Naive thymus-derived CD4-positive, alpha-beta T cell (primary cell): ENCODE measurements at regions of chr18 and their contacts with region 1.

Region 1: GRCh38 chr18:3062798-3063680 is 50.1 kb upstream of the LPIN2 start:
- DNase-seq: peak; percentile 47 to 76 (median 67)
- ATAC-seq: peak; percentile 59
- H3K4me3 ChIP-seq: peak overlapping the region; percentile 55
- H3K4me3 Mint-ChIP-seq: peak overlapping the region; percentile 56 to 83 (median 77)
- H3K27ac ChIP-seq: peak overlapping the region; percentile 96
- H3K27ac Mint-ChIP-seq: peak overlapping the region; percentile 91 to 99 (median 96)
- H3K4me1 ChIP-seq: peaks cover 60 to 70% of the 10 kb centered on the region in 2 donors
- H3K4me1 Mint-ChIP-seq: peaks cover 46 to 74% (median 71%) of the 10 kb centered on the region in 7 donors
- H3K27me3 ChIP-seq: no peaks in the 10 kb centered on the region
- H3K27me3 Mint-ChIP-seq: no peaks in the 10 kb centered on the region

Region 2: DNA sequence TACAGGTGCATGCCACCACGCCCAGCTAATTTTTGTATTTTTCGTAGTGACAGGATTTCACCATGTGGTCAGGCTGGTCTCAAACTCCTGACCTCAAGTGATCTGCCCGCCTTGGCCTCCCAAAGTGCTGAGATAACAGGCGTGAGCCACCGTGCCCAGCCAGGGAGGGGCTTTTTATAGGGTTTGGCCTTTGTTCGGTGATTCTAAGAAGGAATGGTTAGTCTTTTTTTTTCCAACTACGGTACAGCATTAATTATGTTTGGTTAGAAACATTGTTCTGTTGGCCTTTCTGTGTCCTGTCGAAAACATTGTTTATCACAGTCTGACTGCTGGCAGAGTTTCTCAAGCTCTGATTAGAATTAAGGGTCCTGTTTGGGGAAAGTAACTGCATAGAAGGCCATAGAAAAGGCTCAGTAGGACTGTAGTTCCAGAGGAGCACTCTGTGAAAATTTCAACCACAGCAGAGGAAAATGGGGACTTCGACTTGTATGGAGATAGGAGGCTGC is 426.9 kb before region 1 on chr18:
- CTCF ChIA-PET with region 1: no interaction called
- POLR2A ChIA-PET with region 1: interaction called, 8 read pairs
- intact Hi-C with region 1: loop called in 1 of 2 experiments (anchors 5 kb)
- DNase-seq: no peak
- ATAC-seq: peak; percentile 47
- H3K4me3 ChIP-seq: peak overlapping the region; percentile 46
- H3K4me3 Mint-ChIP-seq: peak overlapping the region in 9 of 10 donors; percentile 68 to 93 (median 86)
- H3K27ac ChIP-seq: peak overlapping the region; percentile 83
- H3K27ac Mint-ChIP-seq: peak overlapping the region in 6 of 9 donors; percentile 98 to 100 (median 100)
- H3K4me1 ChIP-seq: peaks cover 65 to 74% of the 10 kb centered on the region in 2 donors
- H3K4me1 Mint-ChIP-seq: peaks cover 0 to 100% (median 79%) of the 10 kb centered on the region in 7 donors
- H3K27me3 ChIP-seq: no peaks in the 10 kb centered on the region
- H3K27me3 Mint-ChIP-seq: no peaks in the 10 kb centered on the region

Region 3: GRCh38 chr18:2978646-2979045 is 84.4 kb before region 1 on chr18:
- CTCF ChIA-PET with region 1: interaction called, 5 read pairs
- POLR2A ChIA-PET with region 1: interaction called, 11 read pairs
- intact Hi-C with region 1: no loop called
- DNase-seq: no peak
- ATAC-seq: no peak
- H3K4me3 ChIP-seq: peak overlapping the region; percentile 69
- H3K4me3 Mint-ChIP-seq: peak overlapping the region; percentile 34 to 94 (median 84)
- H3K27ac ChIP-seq: peak overlapping the region; percentile 76
- H3K27ac Mint-ChIP-seq: peak overlapping the region; percentile 83 to 98 (median 91)
- H3K4me1 ChIP-seq: peaks cover 48 to 57% of the 10 kb centered on the region in 2 donors
- H3K4me1 Mint-ChIP-seq: peaks cover 57 to 85% (median 76%) of the 10 kb centered on the region in 7 donors
- H3K27me3 ChIP-seq: no peaks in the 10 kb centered on the region
- H3K27me3 Mint-ChIP-seq: no peaks in the 10 kb centered on the region

Region 4: GRCh38 chr18:3037423-3037915 is 25.6 kb before region 1 on chr18:
- CTCF ChIA-PET with region 1: no interaction called
- POLR2A ChIA-PET with region 1: interaction called, 8 read pairs
- intact Hi-C with region 1: loop called in 1 of 2 experiments (anchors 1 kb)
- DNase-seq: no peak
- ATAC-seq: peak; percentile 77
- H3K4me3 ChIP-seq: no peak overlapping the region
- H3K4me3 Mint-ChIP-seq: peak overlapping the region in 1 of 10 donors; percentile 28
- H3K27ac ChIP-seq: no peak overlapping the region
- H3K27ac Mint-ChIP-seq: peak overlapping the region in 4 of 9 donors; percentile 12 to 79 (median 30)
- H3K4me1 ChIP-seq: peaks cover 0 to 4% of the 10 kb centered on the region in 2 donors
- H3K4me1 Mint-ChIP-seq: peaks cover 1 to 36% (median 10%) of the 10 kb centered on the region in 7 donors
- H3K27me3 ChIP-seq: no peaks in the 10 kb centered on the region
- H3K27me3 Mint-ChIP-seq: no peaks in the 10 kb centered on the region

Region 5: DNA sequence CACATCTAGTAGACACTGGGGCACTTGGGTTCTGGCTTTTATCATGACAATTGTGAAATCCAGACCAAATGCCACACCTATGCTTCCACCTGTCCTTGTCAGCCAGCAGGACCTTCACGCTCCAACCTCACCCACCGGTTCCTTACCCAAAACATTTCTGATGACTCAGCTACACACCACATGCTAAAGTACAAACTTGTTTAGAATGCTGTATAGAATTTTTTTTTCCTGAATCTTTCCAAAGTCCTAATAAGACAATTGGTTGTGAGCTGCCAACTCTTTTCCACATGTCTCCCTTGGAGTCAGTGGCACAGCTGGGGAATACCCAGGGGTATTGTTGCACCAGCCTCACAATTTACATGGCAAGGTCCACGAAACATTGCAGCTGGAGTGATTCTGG is 25.4 kb after region 1 on chr18:
- CTCF ChIA-PET with region 1: interaction called, 10 read pairs
- POLR2A ChIA-PET with region 1: interaction called, 6 read pairs
- intact Hi-C with region 1: no loop called
- DNase-seq: no peak
- ATAC-seq: no peak
- H3K4me3 ChIP-seq: no peak overlapping the region
- H3K4me3 Mint-ChIP-seq: peak overlapping the region in 1 of 10 donors; percentile 14
- H3K27ac ChIP-seq: no peak overlapping the region
- H3K27ac Mint-ChIP-seq: peak overlapping the region in 4 of 9 donors; percentile 18 to 86 (median 42)
- H3K4me1 ChIP-seq: peaks cover 0 to 11% of the 10 kb centered on the region in 2 donors
- H3K4me1 Mint-ChIP-seq: peaks cover 4 to 20% (median 15%) of the 10 kb centered on the region in 7 donors
- H3K27me3 ChIP-seq: no peaks in the 10 kb centered on the region
- H3K27me3 Mint-ChIP-seq: peaks cover 0 to 6% (median 0%) of the 10 kb centered on the region in 5 donors

Region 6: DNA sequence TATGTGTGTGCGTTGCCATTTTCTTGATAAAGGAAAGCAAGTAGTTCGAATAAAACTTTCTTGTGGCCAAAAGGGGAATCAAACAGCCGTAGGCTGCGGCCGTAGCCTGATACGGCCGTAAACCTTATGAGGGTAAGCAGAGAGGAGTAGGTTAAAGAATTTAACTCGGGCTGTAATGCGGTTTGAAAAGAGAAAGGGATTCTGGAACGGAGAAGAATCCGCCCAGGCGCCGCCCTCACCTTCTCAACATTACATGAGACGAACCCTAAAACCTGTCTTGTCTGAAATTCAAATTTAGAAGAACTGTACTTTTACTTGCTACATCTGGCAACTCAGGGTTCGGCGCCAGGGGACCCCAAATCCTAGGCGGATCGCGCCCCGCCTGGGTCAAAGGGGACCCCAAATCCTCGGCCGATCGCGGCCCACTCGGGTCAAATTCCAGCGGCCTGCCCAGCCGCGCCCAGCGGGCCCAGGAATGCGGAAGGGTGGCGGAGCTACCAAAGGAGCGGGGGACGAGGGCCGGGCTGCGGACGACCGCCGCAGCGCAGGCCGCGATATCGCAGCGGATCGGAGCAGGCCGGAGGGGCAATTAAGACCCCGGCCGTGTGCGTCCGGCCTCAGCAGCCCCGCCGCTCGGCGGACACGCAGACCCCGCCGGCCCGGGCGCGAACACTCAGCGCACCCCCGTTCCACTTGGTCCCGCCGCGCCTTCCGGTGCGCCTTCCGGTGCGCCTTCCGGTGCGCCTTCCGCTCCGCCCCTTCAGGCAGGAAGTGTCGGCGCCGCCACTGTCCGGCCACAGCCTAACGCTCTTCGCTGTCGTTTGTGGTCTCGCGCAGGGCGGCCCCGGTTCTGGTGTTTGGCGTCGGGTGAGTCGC is 198.6 kb after region 1 on chr18 and contains the start of gene MYL12B:
- CTCF ChIA-PET with region 1: no interaction called
- POLR2A ChIA-PET with region 1: interaction called, 12 read pairs
- intact Hi-C with region 1: loop called in 1 of 2 experiments (anchors 2 kb)
- DNase-seq: peak; percentile 72 to 88 (median 84)
- ATAC-seq: peak; percentile 87
- H3K4me3 ChIP-seq: peak within 1 kb of the TSS; percentile 81
- H3K4me3 Mint-ChIP-seq: peak within 1 kb of the TSS; percentile 87 to 100 (median 96)
- H3K27ac ChIP-seq: peak within 1 kb of the TSS; percentile 96
- H3K27ac Mint-ChIP-seq: peak within 1 kb of the TSS; percentile 95 to 100 (median 99)
- H3K4me1 ChIP-seq: peaks cover 54 to 66% of the 10 kb centered on the region in 2 donors
- H3K4me1 Mint-ChIP-seq: peaks cover 48 to 87% (median 83%) of the 10 kb centered on the region in 7 donors
- H3K27me3 ChIP-seq: no peaks in the 10 kb centered on the region
- H3K27me3 Mint-ChIP-seq: no peaks in the 10 kb centered on the region
- total RNA-seq, gene MYL12B: 140 to 300 (median 169) TPM

Region 7: DNA sequence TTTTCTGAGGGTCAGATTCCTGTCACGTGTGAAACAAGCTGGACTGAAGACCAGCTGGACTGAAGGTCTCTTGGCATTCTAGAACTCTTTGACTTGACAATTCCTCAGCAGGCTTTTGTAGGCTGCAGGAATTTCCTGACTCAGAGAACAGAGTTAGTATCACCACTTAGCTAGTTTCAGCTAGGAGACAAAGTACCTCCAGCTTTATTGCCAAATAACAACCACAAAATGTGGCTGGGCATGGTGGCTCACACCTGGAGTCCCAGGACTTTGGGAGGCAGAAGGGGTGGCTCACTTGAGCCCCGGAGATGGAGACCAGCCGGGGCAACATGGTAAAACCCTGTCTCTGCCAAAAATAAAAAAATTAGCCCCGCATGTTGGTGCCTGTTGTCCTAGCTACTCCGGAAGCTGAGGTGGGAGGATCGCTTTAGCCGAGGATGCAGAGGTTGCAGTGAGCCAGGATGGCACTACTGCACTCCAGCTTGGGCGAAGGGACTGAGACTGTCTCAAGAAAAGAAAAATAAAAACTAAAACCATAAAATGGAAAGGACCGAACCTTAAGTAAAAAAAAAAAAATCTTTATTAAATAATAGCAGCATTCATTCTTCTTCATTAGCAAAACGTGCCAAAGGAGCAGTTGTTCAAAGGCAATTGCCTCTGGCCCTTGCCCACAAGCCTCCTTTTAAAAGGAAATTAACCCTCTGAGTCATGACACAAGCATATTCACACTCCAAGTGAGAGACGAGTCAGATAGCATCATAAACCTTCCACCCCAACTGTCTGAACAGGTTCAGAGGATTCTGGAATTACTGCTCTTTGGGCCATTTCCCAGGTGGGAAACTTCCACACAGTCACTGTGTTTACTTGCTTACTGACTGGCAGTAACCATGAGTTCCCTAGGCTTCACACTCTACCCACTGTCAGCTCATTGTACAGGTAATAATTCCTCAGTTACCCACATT is 287.8 kb after region 1 on chr18:
- CTCF ChIA-PET with region 1: no interaction called
- POLR2A ChIA-PET with region 1: no interaction called
- intact Hi-C with region 1: no loop called
- DNase-seq: no peak
- ATAC-seq: no peak
- H3K4me3 ChIP-seq: no peak overlapping the region
- H3K4me3 Mint-ChIP-seq: no peak overlapping the region
- H3K27ac ChIP-seq: no peak overlapping the region
- H3K27ac Mint-ChIP-seq: no peak overlapping the region
- H3K4me1 ChIP-seq: no peaks in the 10 kb centered on the region
- H3K4me1 Mint-ChIP-seq: peaks cover 0 to 3% (median 0%) of the 10 kb centered on the region in 7 donors
- H3K27me3 ChIP-seq: no peaks in the 10 kb centered on the region
- H3K27me3 Mint-ChIP-seq: peaks cover 0 to 17% (median 4%) of the 10 kb centered on the region in 5 donors